ENCODE measurements at regions of chr2 and their contacts with region 1.

Region 1: GRCh38 chr2:96024336-96025193 is 10.2 kb downstream of the GPAT2 start:
- DNase-seq: peak; percentile 51
- ATAC-seq: no peak
- H3K4me3 ChIP-seq: no peak overlapping the region
- H3K27ac ChIP-seq: no peak overlapping the region
- H3K4me1 ChIP-seq: no peaks in the 10 kb centered on the region
- H3K27me3 ChIP-seq: no peaks in the 10 kb centered on the region
- CTCF ChIP-seq: no peak

Region 2: DNA sequence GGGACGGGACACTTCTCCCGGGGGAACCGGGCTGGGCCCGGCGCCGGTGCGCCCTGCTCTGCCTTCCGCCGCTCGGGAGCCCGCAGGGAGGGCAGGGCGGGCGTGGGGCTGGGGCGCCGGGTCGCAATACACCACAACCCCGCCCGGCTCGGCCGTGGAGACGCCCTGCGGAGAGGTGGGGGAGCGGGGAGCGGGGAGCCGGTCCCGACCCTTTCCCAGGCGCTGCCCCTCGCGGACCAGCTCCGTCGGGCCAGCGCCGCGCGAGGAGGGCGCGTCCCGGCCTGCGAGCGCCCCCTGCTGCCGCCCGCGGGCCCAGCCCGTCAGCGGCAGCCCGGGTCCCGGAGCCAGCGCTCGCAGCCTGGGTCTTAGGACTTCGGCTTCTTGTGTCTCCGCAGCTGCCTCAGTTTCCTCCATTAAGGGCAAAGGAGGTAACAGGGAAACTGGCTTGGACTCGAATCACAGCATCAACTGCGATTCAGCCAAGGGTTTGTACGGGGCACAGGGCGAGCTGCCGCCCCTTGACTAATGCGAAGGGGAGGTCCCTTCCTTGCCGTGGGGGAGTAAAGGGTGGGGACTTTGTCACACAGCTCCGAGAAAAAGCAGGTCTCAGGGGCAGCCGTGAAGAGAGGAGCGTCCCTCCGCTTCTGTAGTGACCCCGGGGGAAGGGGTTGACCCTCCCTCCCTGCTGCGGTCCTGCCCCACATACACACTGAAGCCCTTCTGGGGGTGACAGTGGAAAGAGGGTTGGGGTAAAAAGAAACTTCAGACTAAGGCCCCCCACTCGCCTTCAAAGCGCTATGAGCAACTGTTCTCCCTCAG is 92.5 kb after region 1 on chr2:
- intact Hi-C with region 1: loop called (anchors 10 kb)
- DNase-seq: peak; percentile 80
- ATAC-seq: peak; percentile 91
- H3K4me3 ChIP-seq: peak overlapping the region; percentile 55
- H3K27ac ChIP-seq: no peak overlapping the region
- H3K4me1 ChIP-seq: no peaks in the 10 kb centered on the region
- H3K27me3 ChIP-seq: peaks cover 45% of the 10 kb centered on the region
- CTCF ChIP-seq: peak; percentile 68

Region 3: DNA sequence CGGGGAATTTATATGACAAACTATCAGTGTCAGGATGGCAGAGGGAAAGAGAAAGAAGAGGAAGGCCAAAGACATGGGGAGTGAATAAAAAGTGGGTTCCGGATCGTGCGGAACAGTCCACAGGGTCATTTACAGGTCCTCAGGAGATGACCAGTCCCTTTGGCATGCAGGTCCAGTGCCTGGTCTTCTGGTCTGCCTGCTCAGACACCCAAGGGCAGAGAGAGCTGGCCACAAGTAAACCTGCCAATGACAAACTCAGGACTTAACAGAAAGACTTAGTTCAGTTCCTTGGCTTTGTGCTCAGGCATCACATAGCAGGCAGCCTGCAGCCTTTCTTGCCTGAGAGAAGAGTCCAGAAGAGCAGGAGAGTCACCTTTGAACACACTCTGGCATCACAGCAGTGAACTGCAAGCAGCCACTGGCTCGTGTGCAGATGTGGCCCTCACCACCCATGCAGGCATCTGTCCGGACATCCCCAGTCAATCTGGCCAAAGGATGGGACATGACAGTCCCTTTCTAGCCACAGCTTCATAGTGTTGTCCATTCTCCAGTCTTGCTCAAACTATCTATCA is 227.2 kb after region 1 on chr2:
- intact Hi-C with region 1: no loop called
- DNase-seq: peak; percentile 59
- ATAC-seq: peak; percentile 83
- H3K4me3 ChIP-seq: no peak overlapping the region
- H3K27ac ChIP-seq: peak overlapping the region; percentile 51
- H3K4me1 ChIP-seq: peaks cover 43% of the 10 kb centered on the region
- H3K27me3 ChIP-seq: no peaks in the 10 kb centered on the region
- CTCF ChIP-seq: no peak

Measured in upper lobe of right lung (tissue), 1 donor.